ENCODE measurements at regions of chr7 and their contacts with region 1.

Region 1: GRCh38 chr7:29639881-29640595 is 76.4 kb downstream of the PRR15 start:
- DNase-seq: peak in 1 of 10 donors; percentile 46
- H3K4me3 ChIP-seq: no peak overlapping the region
- H3K27ac ChIP-seq: no peak overlapping the region
- H3K27me3 ChIP-seq: no peaks in the 10 kb centered on the region
- CTCF ChIP-seq: no peak

Region 2: DNA sequence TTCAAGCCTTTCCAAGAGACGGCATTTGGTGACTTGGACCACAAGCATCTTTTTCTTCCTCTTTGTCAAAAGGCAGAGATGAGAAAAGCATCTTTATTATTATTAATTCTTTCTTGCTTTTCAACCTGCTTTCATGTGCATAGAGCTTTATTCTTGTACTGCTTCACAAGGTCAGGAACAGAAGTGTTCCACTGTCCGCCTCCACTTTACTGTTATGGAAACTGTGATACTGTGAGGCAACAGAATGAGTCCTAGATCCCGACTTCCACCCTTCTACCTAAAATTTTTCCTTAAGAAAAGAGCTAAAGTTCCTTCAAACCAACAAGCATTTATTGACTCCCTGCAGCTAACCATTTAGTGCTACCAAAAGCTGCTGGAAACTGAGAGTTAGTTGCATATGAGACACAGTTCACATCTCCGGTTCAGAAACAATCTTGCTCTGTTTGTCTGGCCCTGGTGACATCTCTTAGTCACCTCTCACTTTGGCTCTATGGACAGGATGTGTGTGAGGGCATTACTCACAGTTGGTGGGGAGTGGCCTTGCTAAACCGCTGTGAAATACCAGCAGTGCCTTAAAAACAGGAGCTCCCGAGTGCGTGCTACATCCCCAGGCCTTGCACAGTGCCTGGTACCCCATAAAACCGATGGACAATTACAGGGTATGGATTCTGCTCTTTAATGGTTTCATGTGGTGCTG is 604.8 kb before region 1 on chr7:
- intact Hi-C with region 1: no loop called
- DNase-seq: no peak
- H3K4me3 ChIP-seq: no peak overlapping the region
- H3K27ac ChIP-seq: no peak overlapping the region
- H3K27me3 ChIP-seq: no peaks in the 10 kb centered on the region
- CTCF ChIP-seq: no peak

Region 3: GRCh38 chr7:29811586-29811985 is 171.5 kb after region 1 on chr7:
- intact Hi-C with region 1: no loop called
- DNase-seq: no peak
- H3K4me3 ChIP-seq: no peak overlapping the region
- H3K27ac ChIP-seq: peak overlapping the region in 1 of 59 donors; percentile 15
- H3K27me3 ChIP-seq: peaks cover 0 to 34% (median 0%) of the 10 kb centered on the region in 45 donors
- CTCF ChIP-seq: no peak

Region 4: DNA sequence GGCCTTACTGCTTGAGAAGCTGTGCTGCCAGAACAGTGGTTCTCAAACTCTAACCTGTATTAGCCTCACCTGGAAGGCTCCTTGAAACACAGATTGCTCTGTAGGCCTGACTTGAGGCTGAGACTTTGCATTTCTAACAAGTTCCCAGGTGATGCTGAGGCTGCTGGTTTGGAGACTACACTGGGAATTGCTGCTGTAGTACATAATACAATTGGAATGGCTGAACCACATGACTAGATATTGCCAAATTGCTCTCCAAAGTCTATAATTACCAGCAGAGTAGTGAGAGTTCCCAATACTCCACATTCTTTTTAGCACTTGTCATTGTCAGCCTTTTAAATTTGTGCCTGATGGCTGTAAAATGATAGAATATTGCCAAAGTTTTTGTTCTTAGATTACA is 428.0 kb after region 1 on chr7:
- intact Hi-C with region 1: loop called in 1 of 2 experiments (anchors 5 kb)
- DNase-seq: no peak
- H3K4me3 ChIP-seq: no peak overlapping the region
- H3K27ac ChIP-seq: no peak overlapping the region
- H3K27me3 ChIP-seq: no peaks in the 10 kb centered on the region
- CTCF ChIP-seq: no peak